Endothelial cell of umbilical vein (primary cell): ENCODE measurements at regions of chr9 and their contacts with region 1.

Region 1: DNA sequence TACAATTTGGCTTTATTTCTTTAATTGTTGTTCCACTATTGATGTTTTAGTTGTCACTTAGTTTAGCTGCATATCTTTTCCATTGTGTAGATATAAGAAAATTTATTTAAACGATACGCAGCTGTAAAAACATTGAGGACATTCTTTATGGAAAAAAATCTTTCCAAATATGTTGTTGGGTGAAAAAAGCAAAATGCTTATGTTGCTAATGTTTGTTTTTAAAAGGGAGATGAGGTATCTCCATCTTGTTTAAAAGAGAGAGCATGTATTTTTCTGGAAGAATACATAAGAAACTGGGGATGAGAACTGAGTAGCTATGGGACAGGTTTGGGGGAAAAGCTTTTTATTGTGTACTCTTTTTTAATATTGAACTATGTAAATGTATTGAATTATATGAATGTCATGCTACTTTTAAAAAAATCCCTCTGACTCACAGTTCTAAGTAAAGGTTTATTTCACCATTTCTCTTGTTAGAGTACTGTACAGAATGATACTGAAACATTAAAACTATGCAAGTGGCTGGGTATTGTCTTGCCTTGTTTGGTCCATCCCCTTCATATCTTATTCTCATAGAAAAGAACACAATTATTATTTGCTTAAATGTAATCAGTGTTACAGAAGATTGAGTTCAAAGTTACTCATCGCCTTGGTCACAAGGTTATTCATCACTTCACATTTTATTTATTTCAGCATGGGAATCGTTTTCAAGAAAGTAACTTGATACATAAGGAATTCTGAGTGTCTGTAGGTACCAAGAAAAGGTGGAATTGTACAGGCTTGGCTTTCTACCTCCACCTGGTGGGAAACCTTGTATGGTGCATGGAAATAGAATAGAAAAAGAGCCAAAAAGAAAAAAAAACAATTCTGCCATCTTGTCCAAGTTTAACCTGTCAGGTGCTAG is 85.8 kb downstream of the RIC1 start:
- DNase-seq: peak; percentile 36
- H3K4me3 ChIP-seq: no peak overlapping the region
- H3K27ac ChIP-seq: no peak overlapping the region
- H3K4me1 ChIP-seq: peaks cover 19% of the 10 kb centered on the region
- H3K27me3 ChIP-seq: no peaks in the 10 kb centered on the region
- CTCF ChIP-seq: peak in 1 of 2 donors; percentile 12
- POLR2A ChIP-seq: no peak

Region 2: GRCh38 chr9:4662108-4662988 is 1052.4 kb before region 1 on chr9 and contains the start of gene PLPP6:
- CTCF ChIA-PET with region 1: no interaction called
- POLR2A ChIA-PET with region 1: no interaction called
- dilution Hi-C with region 1: no loop called
- intact Hi-C with region 1: no loop called
- DNase-seq: peak; percentile 76
- H3K4me3 ChIP-seq: peak within 1 kb of the TSS; percentile 57 to 81 (median 71)
- H3K27ac ChIP-seq: peak within 1 kb of the TSS; percentile 10
- H3K4me1 ChIP-seq: peaks cover 32% of the 10 kb centered on the region
- H3K27me3 ChIP-seq: no peaks in the 10 kb centered on the region
- CTCF ChIP-seq: peak; percentile 18 to 57
- POLR2A ChIP-seq: peak; percentile 74
- total RNA-seq, gene PLPP6: 5.4 and 6.4 TPM in 2 replicates

Region 3: DNA sequence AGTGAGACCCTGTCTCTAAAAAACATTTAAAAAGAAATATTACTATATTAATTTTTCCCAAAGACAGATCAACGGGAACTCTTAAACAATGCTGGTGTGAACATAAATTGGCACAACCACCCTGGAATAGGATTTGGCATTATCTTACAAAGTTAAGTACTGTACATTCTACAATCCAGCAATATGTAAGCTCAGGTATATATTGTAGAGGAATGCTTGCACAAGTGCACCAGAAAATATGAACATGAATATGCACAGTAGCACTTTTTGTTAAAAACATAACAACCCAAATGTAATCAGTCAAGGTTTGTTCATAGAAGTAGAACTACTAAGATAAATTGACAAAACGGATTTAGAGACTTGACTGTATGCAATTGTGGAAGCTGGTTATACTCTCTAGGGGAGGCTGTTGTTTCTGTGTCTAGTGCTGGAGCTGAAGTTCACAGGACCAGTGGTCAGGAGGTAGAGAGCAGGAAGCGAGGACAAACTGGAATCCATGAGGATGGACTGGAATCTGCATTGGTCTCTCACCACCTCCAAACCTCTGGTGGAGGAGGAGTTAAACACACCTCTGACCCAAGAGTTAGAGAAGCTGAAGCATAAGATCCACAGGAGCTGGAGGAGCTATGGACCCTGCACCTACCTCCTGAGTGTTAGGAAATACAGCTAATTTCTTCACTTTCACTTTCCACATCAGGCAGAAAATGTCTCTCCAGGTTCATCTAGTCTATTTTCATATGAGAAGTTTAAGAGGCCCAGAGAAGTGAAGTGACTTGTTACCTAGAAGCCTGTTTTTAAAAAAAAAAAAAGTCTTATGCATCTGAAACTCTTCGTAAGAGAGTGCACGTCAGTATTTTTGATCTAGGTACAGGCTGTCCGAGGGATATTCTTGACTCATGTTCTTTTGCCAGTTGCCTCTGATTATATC is 106.2 kb before region 1 on chr9:
- CTCF ChIA-PET with region 1: interaction called, 8 read pairs
- POLR2A ChIA-PET with region 1: no interaction called
- dilution Hi-C with region 1: no loop called
- intact Hi-C with region 1: loop called (anchors 5 kb)
- DNase-seq: peak; percentile 67
- H3K4me3 ChIP-seq: peak overlapping the region; percentile 2 to 98 (median 88)
- H3K27ac ChIP-seq: peak overlapping the region; percentile 51
- H3K4me1 ChIP-seq: peaks cover 9% of the 10 kb centered on the region
- H3K27me3 ChIP-seq: no peaks in the 10 kb centered on the region
- CTCF ChIP-seq: no peak
- POLR2A ChIP-seq: no peak

Region 4: DNA sequence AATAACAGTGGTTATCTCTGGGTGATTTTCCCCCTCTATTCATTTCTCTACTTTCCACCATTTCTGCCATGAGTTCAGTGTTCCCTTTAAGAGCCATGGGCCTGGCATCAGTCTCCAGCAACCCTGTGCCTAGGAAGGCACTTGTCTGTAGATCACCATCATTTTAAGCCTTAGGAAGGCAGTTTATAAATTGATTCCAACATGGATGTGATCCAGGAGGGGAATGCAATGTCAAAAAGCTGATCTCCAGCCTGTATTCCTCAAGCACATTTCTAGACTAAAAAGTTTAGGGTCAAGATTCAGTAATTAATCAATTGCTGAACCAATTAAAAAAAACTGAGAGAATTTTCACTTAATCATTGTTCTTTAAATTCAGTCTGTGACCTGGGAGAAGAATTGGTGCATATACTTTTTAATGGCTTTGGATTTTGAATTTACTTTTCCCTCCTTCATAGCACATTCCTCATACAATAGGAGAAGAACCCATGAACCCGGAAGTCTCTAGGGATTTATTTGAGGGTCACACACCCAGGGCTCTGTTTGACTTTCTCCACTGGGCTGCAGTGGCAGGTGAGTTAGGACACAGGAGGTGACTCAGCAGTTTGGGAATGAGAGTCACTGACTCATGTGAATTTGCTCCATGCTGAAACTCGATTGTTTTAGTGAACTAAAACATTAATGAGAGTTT is 124.3 kb after region 1 on chr9:
- CTCF ChIA-PET with region 1: no interaction called
- POLR2A ChIA-PET with region 1: no interaction called
- dilution Hi-C with region 1: no loop called
- intact Hi-C with region 1: no loop called
- DNase-seq: peak; percentile 55
- H3K4me3 ChIP-seq: no peak overlapping the region
- H3K27ac ChIP-seq: peak overlapping the region; percentile 20
- H3K4me1 ChIP-seq: peaks cover 29% of the 10 kb centered on the region
- H3K27me3 ChIP-seq: no peaks in the 10 kb centered on the region
- CTCF ChIP-seq: no peak
- POLR2A ChIP-seq: no peak

Region 5: DNA sequence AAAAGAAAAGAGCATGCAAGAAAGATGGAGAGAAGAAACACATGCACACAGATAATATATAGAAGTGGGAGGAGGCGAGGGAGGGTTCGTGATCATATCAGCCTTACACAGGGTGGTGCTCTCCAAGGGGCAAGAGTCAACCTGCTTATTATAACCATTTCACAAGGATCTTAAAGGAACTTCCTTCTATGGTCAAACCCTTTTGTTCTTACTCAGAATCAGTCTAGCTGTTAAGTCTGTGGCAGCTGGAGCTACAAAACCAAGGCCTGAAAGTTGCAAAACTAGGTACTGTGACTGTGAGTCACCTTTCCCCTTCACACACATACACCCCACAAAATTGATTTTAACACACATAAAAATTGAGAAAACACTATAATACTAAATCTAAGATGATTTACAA is 136.7 kb after region 1 on chr9:
- CTCF ChIA-PET with region 1: no interaction called
- POLR2A ChIA-PET with region 1: no interaction called
- dilution Hi-C with region 1: no loop called
- intact Hi-C with region 1: no loop called
- DNase-seq: peak; percentile 32
- H3K4me3 ChIP-seq: no peak overlapping the region
- H3K27ac ChIP-seq: no peak overlapping the region
- H3K4me1 ChIP-seq: no peaks in the 10 kb centered on the region
- H3K27me3 ChIP-seq: peaks cover 0 to 4% of the 10 kb centered on the region in 2 experiments
- CTCF ChIP-seq: no peak
- POLR2A ChIP-seq: no peak